ENCODE measurements at regions of chr6 and their contacts with region 1.

Region 1: DNA sequence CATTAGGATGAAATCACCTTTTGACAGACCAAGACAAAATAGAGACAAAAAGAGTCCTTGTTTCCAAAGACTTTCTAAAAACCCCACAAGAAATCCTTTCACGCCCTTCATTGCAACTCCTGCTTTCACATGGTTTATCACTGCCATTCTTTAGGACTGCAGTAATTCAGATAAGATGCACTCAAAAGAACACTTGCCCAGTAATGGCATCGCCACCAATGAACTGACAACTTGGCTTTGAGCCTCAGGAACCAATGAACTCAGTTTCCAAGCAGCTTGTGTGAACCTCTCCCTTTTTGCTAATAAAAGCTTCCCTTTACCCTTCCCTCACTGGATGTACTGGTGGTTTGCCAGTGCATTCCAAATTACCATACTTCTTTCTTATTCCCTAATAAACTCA is 21.8 kb downstream of the OSTM1 start:
- H3K4me3 Mint-ChIP-seq: no peak overlapping the region
- H3K27ac Mint-ChIP-seq: no peak overlapping the region
- H3K4me1 Mint-ChIP-seq: peaks cover 9% of the 10 kb centered on the region
- H3K27me3 Mint-ChIP-seq: no peaks in the 10 kb centered on the region

Region 2: DNA sequence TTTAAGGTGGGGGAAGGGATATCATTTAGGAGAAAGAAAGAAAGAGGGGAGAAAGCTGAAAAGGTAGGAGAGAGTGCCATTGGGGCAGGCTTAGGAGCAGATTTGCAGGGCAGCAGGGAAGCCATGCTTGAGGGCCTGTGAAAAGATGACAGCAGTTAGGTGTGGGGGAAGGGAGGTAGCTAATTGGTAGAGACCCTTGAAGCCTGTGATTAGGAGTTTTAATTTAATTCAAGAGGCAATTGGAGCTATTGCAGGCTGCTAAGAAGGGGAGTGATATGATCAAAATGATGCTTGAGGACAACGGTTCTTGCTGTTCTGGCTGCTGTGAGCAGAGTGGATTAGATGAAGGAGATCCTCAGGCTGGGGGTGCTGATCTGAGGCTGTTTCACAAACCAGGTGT is 70.2 kb before region 1 on chr6:
- intact Hi-C with region 1: loop called (anchors 5 kb)
- H3K4me3 Mint-ChIP-seq: no peak overlapping the region
- H3K27ac Mint-ChIP-seq: no peak overlapping the region
- H3K4me1 Mint-ChIP-seq: no peaks in the 10 kb centered on the region
- H3K27me3 Mint-ChIP-seq: peaks cover 3% of the 10 kb centered on the region

Measured in dendritic cell treated with granulocyte-macrophage colony-stimulating factor and Interleukin-4, amounts not matched to agents 40 ng/mL and 50 ng/mL, for 4 days (primary cell).